WTC11 (cell line): ENCODE measurements at regions of chr16 and their contacts with region 1.

Region 1: DNA sequence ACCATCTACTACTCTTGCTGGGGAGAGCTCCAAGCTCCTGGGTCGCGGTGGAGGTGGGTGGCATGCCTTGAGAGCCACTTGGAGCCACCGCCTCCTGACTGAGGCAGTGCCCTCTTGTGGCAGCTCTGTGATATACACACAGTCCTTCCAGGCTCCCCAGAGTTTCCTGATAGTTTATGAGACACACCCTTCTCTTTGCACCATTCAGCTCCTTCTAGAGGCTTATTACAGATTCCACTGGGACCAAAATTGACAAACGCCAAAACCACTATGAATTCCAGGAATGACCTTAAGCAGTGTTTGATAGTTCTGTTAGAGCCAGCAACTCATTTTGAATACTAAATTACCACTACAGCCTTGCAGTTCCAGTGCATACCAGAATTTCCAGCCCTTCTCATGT is 170.1 kb upstream of the CDH13 start:
- DNase-seq: peak; percentile 73
- ATAC-seq: peak; percentile 98
- H3K4me3 Mint-ChIP-seq: no peak overlapping the region
- H3K27ac Mint-ChIP-seq: no peak overlapping the region
- H3K4me1 Mint-ChIP-seq: no peaks in the 10 kb centered on the region; the same call in 1 of the 2 replicates
- H3K27me3 Mint-ChIP-seq: no peaks in the 10 kb centered on the region
- CTCF ChIP-seq: peak; percentile 56

Region 2: DNA sequence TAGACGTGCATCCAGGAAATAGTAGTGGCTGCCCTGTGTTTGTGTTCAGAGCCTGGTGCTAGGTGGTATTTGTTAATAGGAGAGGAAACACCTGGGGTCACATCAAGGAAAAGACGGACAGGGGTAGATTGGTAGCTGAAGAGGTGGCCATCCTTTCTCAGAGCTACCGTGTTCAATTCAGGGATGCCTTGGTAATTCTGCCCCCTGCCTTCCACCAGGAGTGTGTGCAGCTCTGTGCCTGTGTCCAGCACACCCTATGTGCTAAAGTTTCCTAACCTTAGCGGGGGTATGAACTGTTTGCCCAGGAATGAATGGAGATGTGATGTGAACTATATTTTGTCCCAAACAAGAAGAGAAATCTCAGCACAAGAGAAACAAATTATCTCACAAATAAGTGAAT is 112.5 kb before region 1 on chr16:
- CTCF ChIA-PET with region 1: interaction called, 14 read pairs
- POLR2A ChIA-PET with region 1: no interaction called
- DNase-seq: peak; percentile 27
- ATAC-seq: peak; percentile 89
- H3K4me3 Mint-ChIP-seq: no peak overlapping the region
- H3K27ac Mint-ChIP-seq: no peak overlapping the region
- H3K4me1 Mint-ChIP-seq: peaks cover 25% of the 10 kb centered on the region
- H3K27me3 Mint-ChIP-seq: no peaks in the 10 kb centered on the region
- CTCF ChIP-seq: peak; percentile 33; the same call in 1 of the 2 replicates

Region 3: GRCh38 chr16:82439671-82440293 is 16.9 kb before region 1 on chr16:
- CTCF ChIA-PET with region 1: interaction called, 37 read pairs
- POLR2A ChIA-PET with region 1: no interaction called
- DNase-seq: peak; percentile 43
- ATAC-seq: peak; percentile 92
- H3K4me3 Mint-ChIP-seq: no peak overlapping the region
- H3K27ac Mint-ChIP-seq: no peak overlapping the region
- H3K4me1 Mint-ChIP-seq: peaks cover 13% of the 10 kb centered on the region
- H3K27me3 Mint-ChIP-seq: no peaks in the 10 kb centered on the region
- CTCF ChIP-seq: peak; percentile 49

Region 4: DNA sequence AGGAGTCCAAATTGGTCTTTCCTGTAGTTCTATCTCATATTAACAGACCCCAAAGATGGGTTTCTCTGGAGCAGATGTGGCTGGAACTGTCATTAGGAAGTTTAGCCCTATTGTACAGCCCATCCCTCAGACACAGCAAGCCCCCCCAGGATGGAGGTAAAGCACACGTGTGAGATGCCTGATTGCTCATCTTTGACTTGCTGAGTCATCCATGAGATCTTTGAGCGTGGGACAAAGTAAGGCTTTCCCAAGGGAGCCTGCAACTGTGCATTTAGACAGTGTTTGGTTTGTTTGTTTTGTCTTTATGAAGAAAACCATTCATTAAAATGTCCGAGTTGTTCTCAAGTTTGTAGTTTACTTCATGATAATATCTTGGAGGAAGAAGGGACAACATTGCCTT is 24.8 kb after region 1 on chr16:
- CTCF ChIA-PET with region 1: interaction called, 10 read pairs
- POLR2A ChIA-PET with region 1: no interaction called
- DNase-seq: no peak
- ATAC-seq: no peak
- H3K4me3 Mint-ChIP-seq: no peak overlapping the region
- H3K27ac Mint-ChIP-seq: no peak overlapping the region
- H3K4me1 Mint-ChIP-seq: no peaks in the 10 kb centered on the region
- H3K27me3 Mint-ChIP-seq: no peaks in the 10 kb centered on the region
- CTCF ChIP-seq: no peak

Region 5: GRCh38 chr16:82681592-82681991 is 224.9 kb after region 1 on chr16:
- CTCF ChIA-PET with region 1: no interaction called
- POLR2A ChIA-PET with region 1: no interaction called
- DNase-seq: no peak
- ATAC-seq: no peak
- H3K4me3 Mint-ChIP-seq: no peak overlapping the region
- H3K27ac Mint-ChIP-seq: no peak overlapping the region
- H3K4me1 Mint-ChIP-seq: no peaks in the 10 kb centered on the region
- H3K27me3 Mint-ChIP-seq: no peaks in the 10 kb centered on the region
- CTCF ChIP-seq: no peak